Activated B cell treated with CpG ODN at 0.5 μM for 24 hours (primary cell): ENCODE measurements at regions of chr12 and their contacts with region 1.

Region 1: DNA sequence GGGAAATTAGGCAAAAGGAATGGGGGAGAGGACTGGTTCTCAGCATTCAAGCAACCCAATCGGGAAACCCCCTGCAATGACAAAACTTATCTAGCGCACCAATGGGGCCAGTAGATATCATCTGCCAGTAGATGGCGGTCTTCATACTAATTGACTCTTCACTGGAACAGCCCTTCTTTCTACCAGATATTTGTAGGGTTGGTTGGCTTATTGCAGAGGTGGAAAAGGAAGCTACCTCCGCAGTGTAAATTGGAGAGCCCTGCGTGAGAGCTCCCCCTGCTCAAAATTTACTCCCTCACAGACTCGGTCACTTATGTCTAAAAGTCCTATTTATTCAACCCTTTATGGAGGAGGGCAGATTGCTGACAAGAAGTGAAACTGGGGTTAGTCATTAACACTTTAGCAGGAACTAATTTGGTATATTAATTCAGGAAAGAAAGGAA is 166.1 kb upstream of the CCND2 start:
- DNase-seq: peak; percentile 33
- ATAC-seq: peak; percentile 98
- H3K4me3 Mint-ChIP-seq: peak overlapping the region; percentile 45
- H3K27ac Mint-ChIP-seq: peak overlapping the region; percentile 64
- H3K4me1 Mint-ChIP-seq: peaks cover 19% of the 10 kb centered on the region
- H3K27me3 Mint-ChIP-seq: peaks cover 5% of the 10 kb centered on the region
- CTCF ChIP-seq: peak; percentile 34

Region 2: DNA sequence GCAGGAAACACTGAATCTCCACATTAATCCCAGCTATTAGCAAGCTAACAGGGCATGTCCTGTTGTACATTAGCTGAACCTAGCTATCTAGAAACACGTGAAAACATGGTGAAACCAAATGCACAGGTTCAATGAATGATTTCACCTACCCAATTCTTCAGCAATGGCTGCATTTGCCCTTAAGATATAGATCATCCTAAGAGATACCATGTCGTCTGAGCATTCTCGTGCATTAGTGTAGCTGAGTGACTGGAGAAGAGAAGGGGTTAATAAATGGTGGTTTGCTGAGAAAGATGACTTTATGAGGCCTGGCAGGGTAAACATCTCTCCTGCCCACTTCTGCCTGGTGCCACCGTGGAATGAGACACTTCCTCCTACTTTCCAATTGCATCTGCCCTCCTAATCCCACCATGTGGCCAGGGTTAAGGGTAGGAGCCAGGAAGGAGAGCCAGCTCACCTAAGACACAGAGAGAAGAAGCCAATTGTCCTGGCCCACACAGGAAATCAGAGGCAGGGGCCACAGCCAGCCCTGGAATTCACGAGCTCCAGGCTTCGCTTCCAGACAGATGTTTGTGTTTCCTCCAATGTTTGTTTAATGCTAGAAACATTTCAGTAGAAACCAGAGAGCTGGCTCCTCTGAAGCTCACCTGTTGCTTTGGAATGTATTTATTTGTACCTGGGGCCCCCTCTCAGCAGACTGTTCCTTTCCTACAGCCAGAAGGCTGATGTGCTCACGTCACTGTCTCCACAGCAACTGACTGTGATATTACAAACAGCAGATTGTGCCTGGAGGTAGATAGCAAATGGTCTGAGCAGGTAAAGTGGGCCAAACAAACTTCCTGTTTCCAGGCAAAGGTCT is 108.3 kb before region 1 on chr12:
- CTCF ChIA-PET with region 1: interaction called, 4 read pairs
- POLR2A ChIA-PET with region 1: interaction called, 3 read pairs
- intact Hi-C with region 1: loop called (anchors 1 kb)
- DNase-seq: no peak
- ATAC-seq: no peak
- H3K4me3 Mint-ChIP-seq: no peak overlapping the region
- H3K27ac Mint-ChIP-seq: no peak overlapping the region
- H3K4me1 Mint-ChIP-seq: peaks cover 4% of the 10 kb centered on the region
- H3K27me3 Mint-ChIP-seq: peaks cover 6% of the 10 kb centered on the region
- CTCF ChIP-seq: no peak

Region 3: GRCh38 chr12:4135919-4136605 is 28.6 kb after region 1 on chr12:
- CTCF ChIA-PET with region 1: interaction called, 4 read pairs
- POLR2A ChIA-PET with region 1: interaction called, 6 read pairs
- intact Hi-C with region 1: loop called (anchors 1 kb)
- DNase-seq: peak; percentile 46
- ATAC-seq: peak; percentile 83
- H3K4me3 Mint-ChIP-seq: peak overlapping the region; percentile 47
- H3K27ac Mint-ChIP-seq: peak overlapping the region; percentile 93
- H3K4me1 Mint-ChIP-seq: peaks cover 54% of the 10 kb centered on the region
- H3K27me3 Mint-ChIP-seq: no peaks in the 10 kb centered on the region
- CTCF ChIP-seq: no peak

Region 4: GRCh38 chr12:4164559-4165558 is 57.4 kb after region 1 on chr12:
- CTCF ChIA-PET with region 1: interaction called, 6 read pairs
- POLR2A ChIA-PET with region 1: interaction called, 16 read pairs
- intact Hi-C with region 1: loop called (anchors 1 kb)
- DNase-seq: peak; percentile 60
- ATAC-seq: peak; percentile 75
- H3K4me3 Mint-ChIP-seq: peak overlapping the region; percentile 89
- H3K27ac Mint-ChIP-seq: peak overlapping the region; percentile 95
- H3K4me1 Mint-ChIP-seq: peaks cover 42% of the 10 kb centered on the region
- H3K27me3 Mint-ChIP-seq: no peaks in the 10 kb centered on the region
- CTCF ChIP-seq: no peak

Region 5: GRCh38 chr12:4223249-4223845 is 115.9 kb after region 1 on chr12:
- CTCF ChIA-PET with region 1: no interaction called
- POLR2A ChIA-PET with region 1: interaction called, 4 read pairs
- intact Hi-C with region 1: loop called (anchors 1 kb)
- DNase-seq: no peak
- ATAC-seq: peak; percentile 40
- H3K4me3 Mint-ChIP-seq: peak overlapping the region; percentile 47
- H3K27ac Mint-ChIP-seq: peak overlapping the region; percentile 16
- H3K4me1 Mint-ChIP-seq: peaks cover 35% of the 10 kb centered on the region
- H3K27me3 Mint-ChIP-seq: no peaks in the 10 kb centered on the region
- CTCF ChIP-seq: no peak

Region 6: GRCh38 chr12:4383304-4383865 is 275.9 kb after region 1 on chr12:
- CTCF ChIA-PET with region 1: no interaction called
- POLR2A ChIA-PET with region 1: no interaction called
- intact Hi-C with region 1: no loop called
- DNase-seq: no peak
- ATAC-seq: no peak
- H3K4me3 Mint-ChIP-seq: no peak overlapping the region
- H3K27ac Mint-ChIP-seq: no peak overlapping the region
- H3K4me1 Mint-ChIP-seq: no peaks in the 10 kb centered on the region
- H3K27me3 Mint-ChIP-seq: peaks cover 9% of the 10 kb centered on the region
- CTCF ChIP-seq: no peak